Left colon (tissue), 2 donors: ENCODE measurements at regions of chr2 and their contacts with region 1.

Region 1: GRCh38 chr2:62456721-62457539 is 49.1 kb downstream of the TMEM17 start:
- DNase-seq: peak; percentile 55 to 75
- ATAC-seq: peak; percentile 95

Region 2: DNA sequence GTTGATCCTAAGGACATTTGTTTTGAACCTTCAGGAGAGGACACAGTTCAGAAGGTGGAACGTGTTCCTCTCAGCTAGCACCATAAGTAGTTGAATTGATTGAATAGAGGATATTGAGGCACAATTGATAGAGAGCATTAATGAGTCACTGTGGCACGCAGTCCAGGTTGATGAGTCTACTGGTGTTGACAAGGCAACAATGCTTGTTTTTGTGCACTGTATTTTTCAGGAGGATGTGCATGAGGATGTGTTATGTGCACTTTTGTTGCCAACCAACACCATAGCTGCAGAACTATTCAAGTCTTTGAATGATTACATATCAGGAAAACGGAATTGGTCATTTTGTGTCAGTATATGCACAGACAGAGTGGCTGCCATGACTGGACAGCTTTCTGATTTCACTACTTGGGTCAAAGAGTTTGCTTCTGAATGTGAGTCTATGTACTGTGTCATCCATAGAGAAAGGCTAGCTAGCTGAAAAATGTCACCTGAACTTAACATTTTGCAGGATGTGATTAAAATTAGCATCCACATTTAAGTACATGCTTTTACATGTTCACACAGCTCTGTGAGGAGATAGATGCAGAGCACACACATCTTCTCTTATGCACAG is 401.1 kb before region 1 on chr2:
- intact Hi-C with region 1: no loop called
- DNase-seq: no peak
- ATAC-seq: no peak

Region 3: GRCh38 chr2:62774555-62775366 is 317.8 kb after region 1 on chr2:
- intact Hi-C with region 1: loop called (anchors 5 kb)
- DNase-seq: no peak
- ATAC-seq: peak; percentile 80